Endothelial cell of umbilical vein (primary cell): ENCODE measurements at regions of chr9 and their contacts with region 1.

Region 1: DNA sequence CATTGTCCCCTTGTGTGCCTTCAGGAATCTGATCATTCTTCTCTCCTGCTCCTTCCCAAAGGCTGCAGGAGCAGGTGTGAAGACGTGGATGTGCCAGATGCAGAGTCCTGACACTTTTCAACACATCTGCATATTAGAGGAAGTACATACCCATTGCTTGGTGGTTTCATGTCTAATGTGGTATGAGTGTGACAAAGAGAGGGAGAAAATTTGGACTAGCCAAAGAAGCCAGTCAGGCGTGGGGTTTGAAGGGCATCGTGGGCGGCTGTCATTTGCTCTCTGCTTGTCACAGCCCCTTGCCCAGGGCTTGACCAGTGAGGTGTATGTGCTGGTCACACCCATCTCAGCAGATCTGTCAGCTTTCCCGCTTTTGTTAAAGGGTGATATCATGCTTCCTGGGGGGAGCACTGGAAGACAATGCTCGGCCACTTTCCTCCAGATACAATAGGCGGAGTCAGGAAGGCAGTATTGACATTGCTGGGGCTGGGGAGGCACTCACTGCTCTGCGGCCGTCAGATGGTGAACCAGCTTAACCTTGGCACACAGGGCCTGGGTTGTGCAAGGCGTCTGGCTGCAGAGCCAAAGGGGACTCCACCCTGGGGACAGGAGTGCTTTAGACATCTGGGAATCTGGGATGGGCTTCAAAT is 8.6 kb downstream of the TEK start:
- DNase-seq: peak; percentile 98
- H3K4me3 ChIP-seq: no peak overlapping the region
- H3K27ac ChIP-seq: peak overlapping the region; percentile 95
- H3K4me1 ChIP-seq: peaks cover 31% of the 10 kb centered on the region
- H3K27me3 ChIP-seq: no peaks in the 10 kb centered on the region
- CTCF ChIP-seq: no peak
- POLR2A ChIP-seq: peak; percentile 54

Region 2: GRCh38 chr9:26892251-26893029 is 225.2 kb before region 1 on chr9 and contains the start of gene CAAP1:
- CTCF ChIA-PET with region 1: no interaction called
- POLR2A ChIA-PET with region 1: no interaction called
- dilution Hi-C with region 1: no loop called
- intact Hi-C with region 1: loop called (anchors 5 kb)
- DNase-seq: peak; percentile 93
- H3K4me3 ChIP-seq: peak within 1 kb of the TSS; percentile 87 to 100 (median 99)
- H3K27ac ChIP-seq: peak within 1 kb of the TSS; percentile 83
- H3K4me1 ChIP-seq: peaks cover 25% of the 10 kb centered on the region
- H3K27me3 ChIP-seq: no peaks in the 10 kb centered on the region
- CTCF ChIP-seq: peak in 1 of 2 donors; percentile 43
- POLR2A ChIP-seq: peak; percentile 94
- total RNA-seq, gene CAAP1: 16.1 and 18.6 TPM in 2 replicates

Region 3: GRCh38 chr9:26946753-26947727 is 170.6 kb before region 1 on chr9 and contains the start of gene PLAA:
- CTCF ChIA-PET with region 1: no interaction called
- POLR2A ChIA-PET with region 1: no interaction called
- dilution Hi-C with region 1: no loop called
- intact Hi-C with region 1: loop called (anchors 5 kb)
- DNase-seq: peak; percentile 91
- H3K4me3 ChIP-seq: peak within 1 kb of the TSS; percentile 70 to 90 (median 80)
- H3K27ac ChIP-seq: peak within 1 kb of the TSS; percentile 90
- H3K4me1 ChIP-seq: peaks cover 15% of the 10 kb centered on the region
- H3K27me3 ChIP-seq: no peaks in the 10 kb centered on the region
- CTCF ChIP-seq: no peak
- POLR2A ChIP-seq: peak; percentile 77
- total RNA-seq, gene PLAA: 36.9 and 37.9 TPM in 2 replicates

Region 4: GRCh38 chr9:27053369-27054022 is 64.1 kb before region 1 on chr9:
- CTCF ChIA-PET with region 1: interaction called, 5 read pairs
- POLR2A ChIA-PET with region 1: no interaction called
- dilution Hi-C with region 1: no loop called
- intact Hi-C with region 1: loop called (anchors 1 kb)
- DNase-seq: peak; percentile 98
- H3K4me3 ChIP-seq: peak overlapping the region in 1 of 3 experiments; percentile 45
- H3K27ac ChIP-seq: peak overlapping the region; percentile 64
- H3K4me1 ChIP-seq: peaks cover 22% of the 10 kb centered on the region
- H3K27me3 ChIP-seq: no peaks in the 10 kb centered on the region
- CTCF ChIP-seq: no peak
- POLR2A ChIP-seq: peak; percentile 84

Region 5: GRCh38 chr9:27085456-27085855 is 32.2 kb before region 1 on chr9:
- CTCF ChIA-PET with region 1: no interaction called
- POLR2A ChIA-PET with region 1: no interaction called
- dilution Hi-C with region 1: no loop called
- intact Hi-C with region 1: no loop called
- DNase-seq: no peak
- H3K4me3 ChIP-seq: no peak overlapping the region
- H3K27ac ChIP-seq: no peak overlapping the region
- H3K4me1 ChIP-seq: no peaks in the 10 kb centered on the region
- H3K27me3 ChIP-seq: no peaks in the 10 kb centered on the region
- CTCF ChIP-seq: no peak
- POLR2A ChIP-seq: no peak

Region 6: DNA sequence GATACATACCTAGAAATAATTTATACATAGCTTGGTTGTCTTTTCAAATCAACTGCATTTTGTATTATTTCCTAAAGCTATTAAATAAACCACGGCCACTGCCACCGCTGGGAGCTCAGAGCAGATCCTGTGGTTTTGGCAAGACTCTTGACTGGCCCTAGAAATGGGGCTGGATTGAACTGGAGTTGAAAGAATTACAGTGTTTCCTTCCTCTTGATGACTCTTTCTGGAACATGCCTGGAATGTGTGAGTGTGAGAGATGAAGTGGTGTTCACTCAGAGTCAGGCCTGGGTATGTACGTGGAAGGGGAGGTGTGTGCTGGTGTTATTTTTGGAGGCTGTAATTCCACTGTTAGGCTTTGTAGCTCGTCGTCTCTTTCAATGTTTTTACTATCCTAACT is 37.3 kb after region 1 on chr9:
- CTCF ChIA-PET with region 1: interaction called, 11 read pairs
- POLR2A ChIA-PET with region 1: interaction called, 4 read pairs
- dilution Hi-C with region 1: no loop called
- intact Hi-C with region 1: loop called (anchors 1 kb)
- DNase-seq: peak; percentile 96
- H3K4me3 ChIP-seq: no peak overlapping the region
- H3K27ac ChIP-seq: peak overlapping the region; percentile 79
- H3K4me1 ChIP-seq: peaks cover 45% of the 10 kb centered on the region
- H3K27me3 ChIP-seq: no peaks in the 10 kb centered on the region
- CTCF ChIP-seq: no peak
- POLR2A ChIP-seq: no peak

Region 7: GRCh38 chr9:27194401-27195091 is 76.9 kb after region 1 on chr9:
- CTCF ChIA-PET with region 1: no interaction called
- POLR2A ChIA-PET with region 1: no interaction called
- dilution Hi-C with region 1: no loop called
- intact Hi-C with region 1: loop called (anchors 2 kb)
- DNase-seq: peak; percentile 85
- H3K4me3 ChIP-seq: no peak overlapping the region
- H3K27ac ChIP-seq: peak overlapping the region; percentile 72
- H3K4me1 ChIP-seq: peaks cover 42% of the 10 kb centered on the region
- H3K27me3 ChIP-seq: no peaks in the 10 kb centered on the region
- CTCF ChIP-seq: no peak
- POLR2A ChIP-seq: no peak

Region 8: GRCh38 chr9:27749838-27750237 is 632.2 kb after region 1 on chr9:
- CTCF ChIA-PET with region 1: no interaction called
- POLR2A ChIA-PET with region 1: no interaction called
- dilution Hi-C with region 1: no loop called
- intact Hi-C with region 1: no loop called
- DNase-seq: no peak
- H3K4me3 ChIP-seq: no peak overlapping the region
- H3K27ac ChIP-seq: no peak overlapping the region
- H3K4me1 ChIP-seq: no peaks in the 10 kb centered on the region
- H3K27me3 ChIP-seq: no peaks in the 10 kb centered on the region
- CTCF ChIP-seq: no peak
- POLR2A ChIP-seq: no peak